Activated B cell treated with CpG ODN at 0.5 μM for 24 hours (primary cell): ENCODE measurements at regions of chr3 and their contacts with region 1.

Region 1: GRCh38 chr3:128607710-128608048 is 42.9 kb downstream of the RPN1 start:
- DNase-seq: no peak
- ATAC-seq: no peak
- H3K4me3 Mint-ChIP-seq: peak overlapping the region; percentile 24
- H3K27ac Mint-ChIP-seq: no peak overlapping the region
- H3K4me1 Mint-ChIP-seq: peaks cover 2% of the 10 kb centered on the region
- H3K27me3 Mint-ChIP-seq: no peaks in the 10 kb centered on the region
- CTCF ChIP-seq: no peak

Region 2: GRCh38 chr3:128489855-128490649 is 117.6 kb before region 1 on chr3:
- CTCF ChIA-PET with region 1: no interaction called
- POLR2A ChIA-PET with region 1: no interaction called
- intact Hi-C with region 1: loop called (anchors 5 kb)
- DNase-seq: peak; percentile 29
- ATAC-seq: no peak
- H3K4me3 Mint-ChIP-seq: peak overlapping the region; percentile 78
- H3K27ac Mint-ChIP-seq: no peak overlapping the region
- H3K4me1 Mint-ChIP-seq: peaks cover 46% of the 10 kb centered on the region
- H3K27me3 Mint-ChIP-seq: peaks cover 54% of the 10 kb centered on the region
- CTCF ChIP-seq: no peak

Region 3: GRCh38 chr3:128590948-128591347 is 16.7 kb before region 1 on chr3:
- CTCF ChIA-PET with region 1: no interaction called
- POLR2A ChIA-PET with region 1: no interaction called
- intact Hi-C with region 1: no loop called
- DNase-seq: no peak
- ATAC-seq: no peak
- H3K4me3 Mint-ChIP-seq: no peak overlapping the region
- H3K27ac Mint-ChIP-seq: no peak overlapping the region
- H3K4me1 Mint-ChIP-seq: no peaks in the 10 kb centered on the region
- H3K27me3 Mint-ChIP-seq: no peaks in the 10 kb centered on the region
- CTCF ChIP-seq: no peak

Region 4: DNA sequence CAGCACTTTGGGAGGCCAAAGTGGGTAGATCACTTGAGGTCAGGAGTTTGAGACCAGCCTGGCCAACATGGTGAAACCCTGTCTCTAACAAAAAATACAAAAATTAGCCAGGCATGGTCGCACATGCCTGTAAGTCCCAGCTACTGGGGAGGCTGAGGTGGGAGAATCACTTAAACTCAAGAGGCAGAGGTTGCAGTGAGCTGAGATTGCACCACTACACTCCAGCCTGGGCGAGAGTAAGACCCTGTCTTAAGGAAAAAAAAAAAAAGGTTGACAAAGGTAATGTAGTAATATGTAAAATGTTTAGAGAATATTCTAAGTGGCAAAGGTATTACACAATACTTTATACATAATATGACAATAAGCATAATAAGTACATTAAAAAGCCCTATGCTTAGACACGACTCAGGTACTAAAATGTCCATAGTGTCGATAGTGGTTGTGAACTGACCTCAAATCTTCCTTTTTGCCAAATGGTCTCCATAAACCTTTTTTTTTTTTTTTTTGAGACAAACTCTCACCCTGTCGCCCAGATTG is 26.5 kb after region 1 on chr3:
- CTCF ChIA-PET with region 1: no interaction called
- POLR2A ChIA-PET with region 1: no interaction called
- intact Hi-C with region 1: no loop called
- DNase-seq: no peak
- ATAC-seq: no peak
- H3K4me3 Mint-ChIP-seq: no peak overlapping the region
- H3K27ac Mint-ChIP-seq: no peak overlapping the region
- H3K4me1 Mint-ChIP-seq: no peaks in the 10 kb centered on the region
- H3K27me3 Mint-ChIP-seq: no peaks in the 10 kb centered on the region
- CTCF ChIP-seq: no peak